Mammary epithelial cell (primary cell): ENCODE measurements at regions of chr17 and their contacts with region 1.

Region 1: DNA sequence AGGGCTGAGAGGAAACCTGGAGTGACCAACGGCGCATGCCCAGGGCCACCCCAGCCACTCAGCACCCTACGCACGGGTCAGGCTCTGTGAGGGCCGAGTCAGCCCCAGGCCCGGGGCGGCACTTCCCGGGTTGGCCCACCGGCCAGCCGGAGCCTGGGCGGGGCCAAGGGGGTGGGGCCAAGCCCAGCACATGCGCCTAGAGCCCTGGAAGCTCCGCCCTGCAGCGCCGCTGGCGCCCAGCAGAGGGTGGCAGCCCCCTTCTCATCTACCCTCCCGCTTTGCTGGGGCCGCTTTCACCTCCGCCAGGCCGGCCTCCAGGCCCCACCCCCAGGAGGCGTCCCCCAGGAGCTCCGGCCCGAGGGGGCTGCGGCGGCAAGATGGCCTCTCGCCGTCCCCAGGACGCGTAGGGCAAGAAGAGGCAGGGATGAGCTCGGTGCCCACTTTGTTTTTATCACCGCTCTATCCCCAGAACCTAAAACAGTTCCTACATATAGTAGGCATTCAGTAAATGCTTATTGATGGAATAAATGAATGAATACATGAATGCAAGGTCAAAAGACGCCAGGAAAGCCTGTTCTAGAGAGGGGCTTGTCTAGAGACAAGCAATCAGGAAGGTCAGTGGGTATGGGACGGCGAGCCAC is 31.3 kb downstream of the MYO18A start:
- DNase-seq: peak; percentile 84
- H3K4me3 ChIP-seq: peak overlapping the region in 2 of 3 experiments; percentile 20 to 42
- H3K27ac ChIP-seq: peak overlapping the region; percentile 93
- H3K4me1 ChIP-seq: peaks cover 77% of the 10 kb centered on the region
- H3K27me3 ChIP-seq: no peaks in the 10 kb centered on the region
- CTCF ChIP-seq: peak; percentile 67 to 97

Region 2: GRCh38 chr17:28552246-28552999 is 596.5 kb before region 1 on chr17 and contains the start of gene UNC119:
- CTCF ChIA-PET with region 1: no interaction called
- dilution Hi-C with region 1: no loop called
- in situ Hi-C with region 1: no loop called
- intact Hi-C with region 1: no loop called
- DNase-seq: peak; percentile 68
- H3K4me3 ChIP-seq: peak within 1 kb of the TSS; percentile 71 to 93 (median 80)
- H3K27ac ChIP-seq: no peak within 1 kb of the TSS
- H3K4me1 ChIP-seq: peaks cover 6% of the 10 kb centered on the region
- H3K27me3 ChIP-seq: no peaks in the 10 kb centered on the region
- CTCF ChIP-seq: no peak
- total RNA-seq, gene UNC119: 26.3 to 27.5 TPM

Region 3: GRCh38 chr17:29124117-29124924 is 24.6 kb before region 1 on chr17:
- CTCF ChIA-PET with region 1: interaction called, 17 read pairs
- dilution Hi-C with region 1: no loop called
- in situ Hi-C with region 1: no loop called
- intact Hi-C with region 1: loop called (anchors 1 kb)
- DNase-seq: peak; percentile 68
- H3K4me3 ChIP-seq: no peak overlapping the region
- H3K27ac ChIP-seq: no peak overlapping the region
- H3K4me1 ChIP-seq: peaks cover 3% of the 10 kb centered on the region
- H3K27me3 ChIP-seq: no peaks in the 10 kb centered on the region
- CTCF ChIP-seq: peak; percentile 70 to 78

Region 4: DNA sequence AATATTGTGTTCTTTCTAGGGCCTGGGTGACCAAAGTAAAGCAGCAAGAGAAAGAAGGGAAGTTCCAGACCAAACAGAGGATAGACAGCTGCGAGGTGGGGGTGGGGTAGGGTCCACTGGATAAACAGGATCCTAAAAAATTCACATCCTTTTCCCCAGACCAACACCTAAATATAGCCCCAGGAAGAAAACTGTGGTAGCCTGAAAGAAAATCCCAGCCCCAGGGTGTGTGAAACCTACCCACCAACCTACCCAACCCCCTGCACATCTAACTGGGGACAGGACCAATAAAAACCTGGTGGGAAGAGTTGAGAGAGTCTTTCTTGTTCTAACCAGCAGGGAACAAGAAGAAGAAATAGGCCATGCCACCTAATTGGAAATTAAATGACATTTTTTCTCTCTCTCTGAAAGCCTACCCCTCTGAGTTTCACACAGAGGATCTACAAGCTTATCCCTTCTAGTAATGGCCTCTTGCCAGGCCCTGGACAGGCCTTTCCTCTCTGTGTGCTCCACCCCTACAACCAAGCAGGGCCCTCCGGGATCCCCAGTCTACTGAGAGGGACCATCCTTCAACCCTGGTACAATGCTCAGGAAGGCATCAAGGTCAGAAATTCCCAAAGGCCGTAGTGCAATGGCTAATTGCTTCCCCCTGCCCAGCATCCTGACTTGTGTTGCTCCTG is 19.3 kb after region 1 on chr17:
- CTCF ChIA-PET with region 1: no interaction called
- dilution Hi-C with region 1: no loop called
- in situ Hi-C with region 1: no loop called
- intact Hi-C with region 1: no loop called
- DNase-seq: no peak
- H3K4me3 ChIP-seq: no peak overlapping the region
- H3K27ac ChIP-seq: no peak overlapping the region
- H3K4me1 ChIP-seq: peaks cover 12% of the 10 kb centered on the region
- H3K27me3 ChIP-seq: no peaks in the 10 kb centered on the region
- CTCF ChIP-seq: no peak

Region 5: GRCh38 chr17:29195465-29196081 is 46.7 kb after region 1 on chr17:
- CTCF ChIA-PET with region 1: no interaction called
- dilution Hi-C with region 1: loop called (anchors 10 kb)
- in situ Hi-C with region 1: no loop called
- intact Hi-C with region 1: no loop called
- DNase-seq: peak; percentile 24
- H3K4me3 ChIP-seq: no peak overlapping the region
- H3K27ac ChIP-seq: no peak overlapping the region
- H3K4me1 ChIP-seq: peaks cover 9% of the 10 kb centered on the region
- H3K27me3 ChIP-seq: no peaks in the 10 kb centered on the region
- CTCF ChIP-seq: no peak

Region 6: DNA sequence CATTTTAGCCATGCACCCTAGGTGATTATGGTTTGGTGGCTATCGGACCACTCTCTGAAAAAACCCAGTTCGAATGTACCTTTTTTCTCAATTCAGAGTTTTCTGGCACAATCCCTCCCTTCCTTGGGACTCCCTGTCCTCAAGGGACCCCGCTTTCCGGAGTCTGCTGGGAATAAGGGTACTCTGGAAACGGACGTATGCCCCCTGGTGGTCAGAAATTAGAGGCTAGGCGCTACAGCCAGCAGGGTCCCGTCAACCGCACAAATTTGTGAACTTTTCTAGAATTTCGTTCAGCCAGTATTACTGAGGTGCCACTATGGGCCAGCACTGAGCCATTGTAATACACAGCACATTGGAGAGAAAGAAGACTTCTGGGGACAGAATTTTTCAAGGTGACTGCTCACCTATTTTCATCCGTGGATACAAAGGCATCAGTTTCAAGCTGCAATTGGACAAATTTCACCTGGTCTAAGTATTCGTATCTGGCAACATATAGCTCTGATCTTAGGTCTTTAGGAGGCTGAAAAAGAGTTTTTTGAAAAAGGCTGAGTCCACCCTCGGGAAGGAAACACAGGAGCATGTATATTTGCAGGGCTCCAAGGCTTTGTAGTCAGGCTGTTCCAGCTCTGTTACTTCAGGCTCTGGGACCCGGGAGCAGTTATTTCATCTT is 70.6 kb after region 1 on chr17:
- CTCF ChIA-PET with region 1: interaction called, 15 read pairs
- dilution Hi-C with region 1: no loop called
- in situ Hi-C with region 1: loop called (anchors 5 to 10 kb)
- intact Hi-C with region 1: loop called (anchors 1 kb)
- DNase-seq: peak; percentile 54
- H3K4me3 ChIP-seq: no peak overlapping the region
- H3K27ac ChIP-seq: no peak overlapping the region
- H3K4me1 ChIP-seq: peaks cover 33% of the 10 kb centered on the region
- H3K27me3 ChIP-seq: no peaks in the 10 kb centered on the region
- CTCF ChIP-seq: peak; percentile 85 to 87

Region 7: GRCh38 chr17:29293890-29294579 is 145.1 kb after region 1 on chr17 and contains the start of gene NUFIP2:
- CTCF ChIA-PET with region 1: interaction called, 3 read pairs
- dilution Hi-C with region 1: no loop called
- in situ Hi-C with region 1: no loop called
- intact Hi-C with region 1: loop called (anchors 1 kb)
- DNase-seq: peak; percentile 98
- H3K4me3 ChIP-seq: peak within 1 kb of the TSS; percentile 82 to 95 (median 93)
- H3K27ac ChIP-seq: peak within 1 kb of the TSS; percentile 79
- H3K4me1 ChIP-seq: peaks cover 9% of the 10 kb centered on the region
- H3K27me3 ChIP-seq: no peaks in the 10 kb centered on the region
- CTCF ChIP-seq: no peak
- total RNA-seq, gene NUFIP2: 57.2 to 72.3 TPM

Region 8: DNA sequence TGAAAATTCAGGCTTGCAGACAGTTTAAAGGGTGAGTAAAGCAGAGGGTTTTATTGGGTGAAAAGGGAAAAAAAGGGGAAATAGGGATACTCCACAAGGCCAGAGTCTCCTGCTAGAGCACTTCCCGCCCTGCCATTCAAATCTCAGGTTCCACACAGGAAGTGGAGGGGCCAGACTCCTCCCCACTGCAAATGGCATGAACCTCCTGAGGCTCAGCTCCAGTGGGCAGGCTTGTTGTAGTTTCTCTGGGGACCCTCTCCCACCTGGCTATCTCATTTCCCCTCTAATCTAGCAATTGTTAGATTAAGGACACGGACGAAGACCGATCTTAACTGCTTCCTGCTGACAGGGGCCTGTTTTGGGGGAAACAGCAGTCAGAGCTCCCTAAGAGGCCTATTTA is 284.6 kb after region 1 on chr17:
- CTCF ChIA-PET with region 1: no interaction called
- dilution Hi-C with region 1: loop called (anchors 10 kb)
- in situ Hi-C with region 1: no loop called
- intact Hi-C with region 1: no loop called
- DNase-seq: no peak
- H3K4me3 ChIP-seq: no peak overlapping the region
- H3K27ac ChIP-seq: no peak overlapping the region
- H3K4me1 ChIP-seq: no peaks in the 10 kb centered on the region
- H3K27me3 ChIP-seq: no peaks in the 10 kb centered on the region
- CTCF ChIP-seq: no peak

Region 9: DNA sequence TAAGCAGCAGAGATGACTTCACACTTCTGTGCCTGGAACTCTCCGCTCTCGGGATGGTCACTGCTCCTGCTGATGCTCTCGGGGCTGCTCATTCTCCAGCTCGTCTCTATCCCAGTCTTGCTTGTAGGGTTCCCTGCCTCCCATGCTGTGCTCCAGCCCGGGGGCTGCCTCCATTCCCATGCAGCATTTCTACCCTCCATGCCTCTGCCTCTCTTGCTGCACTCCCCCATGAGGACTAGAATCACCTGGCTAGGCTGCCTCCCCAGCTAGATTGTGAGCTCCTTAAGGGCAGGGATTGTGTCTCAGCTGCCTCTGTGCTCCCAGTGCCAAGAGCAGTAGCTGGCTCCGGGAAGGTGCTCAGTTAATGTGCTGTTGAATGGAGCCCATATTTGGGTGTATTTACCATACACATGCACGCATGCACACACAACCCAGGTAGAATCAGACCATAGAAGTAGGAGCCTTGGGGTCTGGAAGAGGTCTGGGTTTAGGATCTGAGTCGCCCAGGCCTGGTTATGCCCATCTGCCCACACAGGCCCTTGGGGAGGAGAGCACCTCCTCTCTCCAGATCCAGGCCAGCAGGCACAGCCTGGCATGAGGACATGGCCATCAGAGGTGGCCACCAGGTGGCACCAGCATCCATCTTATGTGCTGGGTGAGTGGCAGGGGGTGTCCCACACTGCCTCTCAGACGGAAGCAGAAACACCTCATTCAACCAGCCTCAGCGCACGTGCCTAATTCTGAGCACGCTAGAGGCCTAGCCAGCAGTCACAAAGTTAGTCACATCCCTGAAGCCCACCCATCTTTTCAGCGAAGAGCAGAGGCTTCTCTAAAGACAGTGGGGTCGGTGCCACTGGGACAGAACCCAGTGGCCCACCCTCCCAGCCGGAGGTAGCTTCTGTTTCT is 431.2 kb after region 1 on chr17:
- CTCF ChIA-PET with region 1: no interaction called
- dilution Hi-C with region 1: no loop called
- in situ Hi-C with region 1: no loop called
- intact Hi-C with region 1: loop called (anchors 10 kb)
- DNase-seq: peak; percentile 73
- H3K4me3 ChIP-seq: no peak overlapping the region
- H3K27ac ChIP-seq: no peak overlapping the region
- H3K4me1 ChIP-seq: peaks cover 50% of the 10 kb centered on the region
- H3K27me3 ChIP-seq: no peaks in the 10 kb centered on the region
- CTCF ChIP-seq: peak; percentile 80 to 97